ENCODE measurements at regions of chr18 and their contacts with region 1.

Region 1: DNA sequence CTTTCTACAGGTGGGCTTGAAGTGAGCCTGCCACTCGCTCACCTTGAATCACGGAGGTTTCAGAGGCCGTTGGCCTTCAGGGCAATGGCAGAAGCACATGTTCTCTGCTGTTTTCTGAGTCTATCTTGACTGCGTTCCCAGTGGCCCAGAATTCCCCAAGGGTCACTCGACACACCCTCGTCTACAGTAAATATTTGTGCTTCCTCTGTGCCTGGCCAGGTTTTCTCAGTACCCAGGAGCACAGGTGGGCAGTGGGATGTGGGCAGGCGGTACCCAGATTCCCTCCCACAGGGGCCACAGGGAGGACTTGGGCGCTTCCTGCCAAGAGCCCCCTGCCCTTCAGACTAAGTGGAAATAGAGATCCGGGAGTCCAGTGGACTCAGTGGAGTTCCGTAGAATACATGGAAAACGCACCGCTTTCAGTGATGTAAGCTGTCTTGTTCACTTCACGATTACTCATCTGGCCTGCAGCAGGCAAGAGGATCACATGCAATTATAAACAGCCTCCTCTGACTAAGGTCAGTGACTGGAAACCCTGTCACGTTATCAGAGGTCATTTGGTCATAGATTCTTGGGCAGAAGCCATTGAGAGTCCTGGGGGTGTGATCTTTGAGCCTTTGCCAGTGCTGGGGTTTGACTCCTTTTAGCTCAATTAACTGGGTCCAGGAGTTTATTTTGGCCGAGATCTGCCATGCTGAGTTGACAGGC is 179.8 kb downstream of the NEDD4L start:
- DNase-seq: peak; percentile 98
- H3K4me3 ChIP-seq: peak overlapping the region in 1 of 3 experiments; percentile 94
- H3K27ac ChIP-seq: peak overlapping the region; percentile 98
- H3K4me1 ChIP-seq: peaks cover 48% of the 10 kb centered on the region
- H3K27me3 ChIP-seq: no peaks in the 10 kb centered on the region
- CTCF ChIP-seq: no peak
- POLR2A ChIP-seq: peak; percentile 56

Region 2: DNA sequence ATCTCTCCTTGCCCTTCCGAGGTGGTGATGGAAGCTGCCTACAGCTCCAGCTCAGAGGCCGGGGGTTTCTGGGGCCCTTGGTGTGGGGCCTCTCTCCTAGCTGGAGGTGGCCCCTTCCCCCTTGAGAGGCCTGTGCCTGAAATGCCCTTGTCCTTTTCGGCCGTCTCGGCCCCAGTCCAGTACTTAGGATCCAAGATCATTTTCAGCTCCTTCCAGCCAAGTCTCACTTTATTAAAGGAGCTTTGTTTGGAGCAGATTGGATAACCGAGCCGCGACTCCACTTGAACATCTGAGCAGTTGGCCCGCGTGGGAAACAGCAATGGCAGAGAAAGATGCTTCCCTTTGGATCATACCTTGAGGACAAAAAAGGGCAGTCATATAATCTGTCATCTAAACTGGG is 54.9 kb before region 1 on chr18:
- CTCF ChIA-PET with region 1: no interaction called
- POLR2A ChIA-PET with region 1: no interaction called
- dilution Hi-C with region 1: no loop called
- intact Hi-C with region 1: no loop called
- DNase-seq: no peak
- H3K4me3 ChIP-seq: no peak overlapping the region
- H3K27ac ChIP-seq: no peak overlapping the region
- H3K4me1 ChIP-seq: no peaks in the 10 kb centered on the region
- H3K27me3 ChIP-seq: no peaks in the 10 kb centered on the region
- CTCF ChIP-seq: no peak
- POLR2A ChIP-seq: no peak

Region 3: DNA sequence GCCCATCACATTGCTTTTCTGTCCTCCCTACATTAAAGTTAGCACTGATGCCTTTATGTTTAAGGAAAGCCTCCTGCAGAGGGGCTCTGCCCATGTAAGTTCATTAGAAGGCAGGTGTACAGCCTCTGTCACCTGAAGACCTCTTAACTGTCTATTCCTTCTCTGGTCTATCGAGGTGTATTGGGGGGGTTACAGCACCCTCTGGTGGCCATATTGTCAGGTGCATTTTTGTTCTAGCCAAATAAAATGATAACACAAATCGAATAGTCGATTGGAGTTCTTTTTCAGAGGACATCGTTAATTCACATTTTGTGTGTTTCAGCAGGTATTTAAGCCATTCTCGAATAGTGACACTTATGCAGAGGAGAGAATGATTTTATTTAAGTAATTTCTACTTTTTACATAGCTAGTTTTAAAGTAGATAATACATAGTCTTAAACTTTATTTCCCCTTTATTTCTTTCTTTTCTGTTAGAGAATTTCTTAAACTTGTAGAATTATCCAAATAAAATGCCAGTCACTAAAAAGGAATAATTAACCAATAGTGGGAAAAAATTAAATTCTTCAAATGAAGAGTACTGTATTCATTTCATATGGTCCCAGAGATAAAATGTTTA is 43.0 kb before region 1 on chr18:
- CTCF ChIA-PET with region 1: interaction called, 12 read pairs
- POLR2A ChIA-PET with region 1: no interaction called
- dilution Hi-C with region 1: no loop called
- intact Hi-C with region 1: loop called (anchors 2 kb)
- DNase-seq: peak; percentile 67
- H3K4me3 ChIP-seq: no peak overlapping the region
- H3K27ac ChIP-seq: no peak overlapping the region
- H3K4me1 ChIP-seq: peaks cover 24% of the 10 kb centered on the region
- H3K27me3 ChIP-seq: no peaks in the 10 kb centered on the region
- CTCF ChIP-seq: peak; percentile 75 to 77
- POLR2A ChIP-seq: no peak

Region 4: DNA sequence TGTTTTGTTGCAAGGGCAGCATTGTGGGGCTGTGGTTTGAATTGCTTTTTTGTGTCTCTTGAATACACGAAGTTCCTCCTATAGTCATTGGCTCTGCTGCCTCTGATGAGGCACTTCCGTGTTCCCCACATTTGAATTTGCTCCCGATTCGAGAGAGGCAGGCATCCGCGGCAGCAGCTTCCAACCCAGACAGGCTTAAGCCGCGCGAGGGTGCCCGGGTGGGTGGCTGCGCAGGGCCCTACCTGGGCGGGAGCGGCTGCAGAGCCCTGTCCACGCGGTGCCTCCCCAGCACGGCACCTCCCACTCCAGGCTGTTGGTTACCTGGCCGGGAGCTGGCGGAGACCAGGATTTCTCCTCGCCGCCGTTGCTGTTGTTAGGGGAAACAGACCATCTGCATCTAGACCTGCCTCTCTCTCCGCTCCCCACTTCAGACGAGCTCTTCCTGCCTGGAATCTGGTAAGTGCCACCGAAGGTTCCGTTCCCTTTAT is 28.5 kb before region 1 on chr18:
- CTCF ChIA-PET with region 1: interaction called, 9 read pairs
- POLR2A ChIA-PET with region 1: no interaction called
- dilution Hi-C with region 1: no loop called
- intact Hi-C with region 1: loop called (anchors 1 kb)
- DNase-seq: no peak
- H3K4me3 ChIP-seq: peak overlapping the region in 2 of 3 experiments; percentile 5 to 52
- H3K27ac ChIP-seq: peak overlapping the region; percentile 24
- H3K4me1 ChIP-seq: peaks cover 31% of the 10 kb centered on the region
- H3K27me3 ChIP-seq: no peaks in the 10 kb centered on the region
- CTCF ChIP-seq: no peak
- POLR2A ChIP-seq: no peak

Region 5: GRCh38 chr18:58247363-58247834 is 23.5 kb after region 1 on chr18:
- CTCF ChIA-PET with region 1: interaction called, 5 read pairs
- POLR2A ChIA-PET with region 1: no interaction called
- dilution Hi-C with region 1: no loop called
- intact Hi-C with region 1: loop called (anchors 1 kb)
- DNase-seq: peak; percentile 83
- H3K4me3 ChIP-seq: peak overlapping the region in 2 of 3 experiments; percentile 4 to 20
- H3K27ac ChIP-seq: peak overlapping the region; percentile 64
- H3K4me1 ChIP-seq: peaks cover 29% of the 10 kb centered on the region
- H3K27me3 ChIP-seq: no peaks in the 10 kb centered on the region
- CTCF ChIP-seq: no peak
- POLR2A ChIP-seq: no peak

Region 6: GRCh38 chr18:58314284-58314683 is 90.4 kb after region 1 on chr18:
- CTCF ChIA-PET with region 1: interaction called, 5 read pairs
- POLR2A ChIA-PET with region 1: interaction called, 3 read pairs
- dilution Hi-C with region 1: no loop called
- intact Hi-C with region 1: loop called (anchors 1 kb)
- DNase-seq: peak; percentile 36
- H3K4me3 ChIP-seq: no peak overlapping the region
- H3K27ac ChIP-seq: peak overlapping the region; percentile 79
- H3K4me1 ChIP-seq: peaks cover 33% of the 10 kb centered on the region
- H3K27me3 ChIP-seq: no peaks in the 10 kb centered on the region
- CTCF ChIP-seq: no peak
- POLR2A ChIP-seq: no peak

Measured in endothelial cell of umbilical vein (primary cell).